Mammary epithelial cell (primary cell): ENCODE measurements at regions of chr1 and their contacts with region 1.

Region 1: GRCh38 chr1:205658943-205659581 is 21.2 kb downstream of the SLC45A3 start:
- DNase-seq: peak; percentile 46
- H3K4me3 ChIP-seq: no peak overlapping the region
- H3K27ac ChIP-seq: no peak overlapping the region
- H3K4me1 ChIP-seq: peaks cover 6% of the 10 kb centered on the region
- H3K27me3 ChIP-seq: no peaks in the 10 kb centered on the region
- CTCF ChIP-seq: peak; percentile 81 to 95

Region 2: GRCh38 chr1:204296431-204296988 is 1362.6 kb before region 1 on chr1:
- CTCF ChIA-PET with region 1: interaction called, 14 read pairs
- dilution Hi-C with region 1: no loop called
- in situ Hi-C with region 1: no loop called
- intact Hi-C with region 1: no loop called
- DNase-seq: no peak
- H3K4me3 ChIP-seq: no peak overlapping the region
- H3K27ac ChIP-seq: no peak overlapping the region
- H3K4me1 ChIP-seq: peaks cover 44% of the 10 kb centered on the region
- H3K27me3 ChIP-seq: no peaks in the 10 kb centered on the region
- CTCF ChIP-seq: no peak

Region 3: DNA sequence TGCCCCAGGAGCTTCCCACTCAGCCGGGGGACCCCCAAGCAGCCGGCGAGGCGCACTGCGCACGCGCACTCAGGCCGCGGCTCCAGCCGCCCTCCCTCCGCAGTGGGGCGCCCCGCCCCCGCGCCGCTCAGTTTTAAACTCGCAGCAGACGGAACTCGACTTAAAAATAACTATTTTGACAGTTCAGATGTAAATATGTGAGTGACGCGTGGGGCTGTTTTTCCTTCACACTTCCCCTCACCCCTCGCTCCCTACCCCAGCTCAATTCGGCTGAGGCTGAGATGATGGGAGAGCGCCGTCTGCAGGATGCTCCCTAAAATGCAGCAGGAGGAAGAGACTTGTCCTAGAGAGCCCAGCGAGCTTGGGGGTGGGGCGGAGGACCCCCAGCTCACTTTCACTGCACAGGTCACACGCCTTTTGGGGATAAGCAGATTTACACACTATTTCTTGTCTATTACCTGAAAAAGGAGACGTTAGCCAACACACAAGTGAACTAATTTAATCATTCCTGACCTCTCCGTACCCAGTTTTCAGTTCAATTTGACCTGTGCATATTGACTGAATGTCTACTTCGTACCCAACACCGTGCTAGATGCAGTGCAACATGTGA is 228.3 kb before region 1 on chr1:
- CTCF ChIA-PET with region 1: no interaction called
- dilution Hi-C with region 1: no loop called
- in situ Hi-C with region 1: no loop called
- intact Hi-C with region 1: no loop called
- DNase-seq: no peak
- H3K4me3 ChIP-seq: peak overlapping the region; percentile 26 to 49 (median 47)
- H3K27ac ChIP-seq: no peak overlapping the region
- H3K4me1 ChIP-seq: peaks cover 8% of the 10 kb centered on the region
- H3K27me3 ChIP-seq: peaks cover 3% of the 10 kb centered on the region
- CTCF ChIP-seq: peak; percentile 92 to 93

Region 4: GRCh38 chr1:205485338-205486228 is 173.5 kb before region 1 on chr1:
- CTCF ChIA-PET with region 1: no interaction called
- dilution Hi-C with region 1: no loop called
- in situ Hi-C with region 1: no loop called
- intact Hi-C with region 1: loop called (anchors 1 kb)
- DNase-seq: peak; percentile 56
- H3K4me3 ChIP-seq: no peak overlapping the region
- H3K27ac ChIP-seq: no peak overlapping the region
- H3K4me1 ChIP-seq: peaks cover 16% of the 10 kb centered on the region
- H3K27me3 ChIP-seq: no peaks in the 10 kb centered on the region
- CTCF ChIP-seq: peak; percentile 76 to 96

Region 5: GRCh38 chr1:205591522-205592351 is 67.3 kb before region 1 on chr1:
- CTCF ChIA-PET with region 1: interaction called, 22 read pairs
- dilution Hi-C with region 1: no loop called
- in situ Hi-C with region 1: loop called in 1 of 2 experiments (anchors 5 kb)
- intact Hi-C with region 1: loop called (anchors 1 kb)
- DNase-seq: peak; percentile 98
- H3K4me3 ChIP-seq: peak overlapping the region in 1 of 3 experiments; percentile 25
- H3K27ac ChIP-seq: peak overlapping the region; percentile 26
- H3K4me1 ChIP-seq: peaks cover 21% of the 10 kb centered on the region
- H3K27me3 ChIP-seq: no peaks in the 10 kb centered on the region
- CTCF ChIP-seq: peak; percentile 90 to 99

Region 6: GRCh38 chr1:205616563-205617293 is 42.3 kb before region 1 on chr1:
- CTCF ChIA-PET with region 1: no interaction called
- dilution Hi-C with region 1: no loop called
- in situ Hi-C with region 1: no loop called
- intact Hi-C with region 1: no loop called
- DNase-seq: peak; percentile 84
- H3K4me3 ChIP-seq: no peak overlapping the region
- H3K27ac ChIP-seq: peak overlapping the region; percentile 46
- H3K4me1 ChIP-seq: peaks cover 12% of the 10 kb centered on the region
- H3K27me3 ChIP-seq: no peaks in the 10 kb centered on the region
- CTCF ChIP-seq: no peak

Region 7: DNA sequence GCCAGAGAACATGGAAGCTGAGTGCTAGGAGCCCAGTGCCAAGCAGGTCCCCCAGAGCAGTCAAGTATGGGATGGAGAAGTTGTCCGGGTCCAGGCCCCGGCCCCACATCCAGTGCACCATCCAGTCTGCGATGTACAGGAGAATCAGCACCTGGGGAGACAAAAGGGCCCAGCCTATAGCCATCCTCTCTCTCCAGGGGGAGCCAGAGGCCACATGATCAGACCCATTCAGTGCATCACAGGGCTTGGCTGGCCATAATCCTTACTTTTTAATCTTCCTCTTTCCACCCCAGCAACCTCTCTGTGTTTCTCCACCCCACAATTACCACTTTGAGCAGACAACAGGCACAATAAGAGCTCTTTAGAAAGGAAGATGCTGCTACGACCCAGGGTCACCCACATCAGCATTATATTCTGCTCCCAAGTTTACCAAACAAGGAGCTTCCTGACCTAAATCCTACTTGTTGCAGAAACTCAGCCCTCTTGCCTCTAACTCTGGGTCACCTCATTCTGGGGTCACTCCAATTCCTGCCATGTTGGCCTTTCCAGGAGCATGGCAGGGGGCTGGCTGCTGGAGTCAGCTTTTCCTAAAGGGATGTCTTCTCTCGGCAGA is 132.6 kb after region 1 on chr1:
- CTCF ChIA-PET with region 1: no interaction called
- dilution Hi-C with region 1: no loop called
- in situ Hi-C with region 1: no loop called
- intact Hi-C with region 1: loop called (anchors 5 kb)
- DNase-seq: peak; percentile 42
- H3K4me3 ChIP-seq: no peak overlapping the region
- H3K27ac ChIP-seq: no peak overlapping the region
- H3K4me1 ChIP-seq: no peaks in the 10 kb centered on the region
- H3K27me3 ChIP-seq: no peaks in the 10 kb centered on the region
- CTCF ChIP-seq: peak; percentile 89 to 90

Region 8: DNA sequence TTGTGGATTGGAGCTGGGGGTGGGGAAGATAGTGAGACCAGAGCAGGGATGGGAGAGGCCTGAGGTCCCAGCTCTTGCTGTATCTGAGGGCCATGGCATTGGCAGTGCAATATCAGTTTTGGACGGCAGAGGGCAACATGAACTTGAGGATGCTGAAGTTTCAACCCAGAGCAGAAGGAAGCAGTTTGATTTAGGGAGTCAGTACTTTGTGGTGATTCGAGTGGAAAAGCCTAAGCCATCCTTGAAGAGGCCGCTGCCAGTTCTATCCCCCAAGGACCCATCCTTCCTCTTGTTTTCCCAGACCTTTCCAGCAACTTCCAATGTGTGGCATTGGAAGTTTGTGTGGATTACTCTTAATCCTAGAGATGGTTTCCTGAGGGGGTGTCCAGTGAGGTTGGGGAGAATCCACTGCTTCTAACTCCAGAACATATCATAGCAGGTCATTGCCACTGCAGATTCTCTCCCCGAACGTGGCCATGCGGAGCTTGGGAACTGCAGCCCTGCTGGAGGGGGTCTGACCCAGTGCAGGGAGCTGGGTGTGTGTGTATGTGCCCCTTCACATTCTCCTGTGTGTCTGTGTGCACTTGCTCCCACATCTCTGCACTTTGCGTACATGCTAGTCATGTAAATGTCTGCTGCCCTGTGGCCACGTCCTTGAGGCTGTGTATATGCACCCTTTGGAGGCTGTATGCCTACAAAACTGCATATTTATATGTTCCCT is 260.1 kb after region 1 on chr1:
- CTCF ChIA-PET with region 1: interaction called, 3 read pairs
- dilution Hi-C with region 1: no loop called
- in situ Hi-C with region 1: loop called in 1 of 2 experiments (anchors 25 kb)
- intact Hi-C with region 1: loop called (anchors 1 kb)
- DNase-seq: peak; percentile 66
- H3K4me3 ChIP-seq: no peak overlapping the region
- H3K27ac ChIP-seq: no peak overlapping the region
- H3K4me1 ChIP-seq: no peaks in the 10 kb centered on the region
- H3K27me3 ChIP-seq: no peaks in the 10 kb centered on the region
- CTCF ChIP-seq: peak; percentile 83 to 93